Left ventricle myocardium inferior (tissue), 1 donor: ENCODE measurements at regions of chr2 and their contacts with region 1.

Region 1: DNA sequence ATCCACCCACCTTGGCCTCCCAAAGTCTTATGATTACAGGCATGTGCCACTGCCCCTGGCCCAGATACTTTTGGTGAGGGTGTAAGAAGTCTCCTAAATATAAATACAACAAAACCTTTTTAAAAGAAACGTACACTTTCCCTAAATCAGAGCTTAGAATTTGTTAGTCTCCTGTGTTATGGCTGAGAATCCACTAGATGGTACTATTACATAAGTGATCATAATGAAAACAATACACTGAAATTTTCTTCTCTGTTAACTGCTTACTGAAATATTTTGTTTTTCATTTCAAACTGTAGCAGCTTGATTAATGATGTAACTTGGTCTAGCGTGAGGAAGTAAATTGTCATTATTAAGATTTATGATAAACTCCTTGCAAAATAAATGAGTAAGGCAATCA is 74.8 kb upstream of the FAM98A start:
- DNase-seq: no peak
- H3K4me3 ChIP-seq: no peak overlapping the region
- H3K27ac ChIP-seq: no peak overlapping the region
- H3K4me1 ChIP-seq: no peaks in the 10 kb centered on the region
- H3K27me3 ChIP-seq: no peaks in the 10 kb centered on the region
- CTCF ChIP-seq: peak; percentile 70

Region 2: DNA sequence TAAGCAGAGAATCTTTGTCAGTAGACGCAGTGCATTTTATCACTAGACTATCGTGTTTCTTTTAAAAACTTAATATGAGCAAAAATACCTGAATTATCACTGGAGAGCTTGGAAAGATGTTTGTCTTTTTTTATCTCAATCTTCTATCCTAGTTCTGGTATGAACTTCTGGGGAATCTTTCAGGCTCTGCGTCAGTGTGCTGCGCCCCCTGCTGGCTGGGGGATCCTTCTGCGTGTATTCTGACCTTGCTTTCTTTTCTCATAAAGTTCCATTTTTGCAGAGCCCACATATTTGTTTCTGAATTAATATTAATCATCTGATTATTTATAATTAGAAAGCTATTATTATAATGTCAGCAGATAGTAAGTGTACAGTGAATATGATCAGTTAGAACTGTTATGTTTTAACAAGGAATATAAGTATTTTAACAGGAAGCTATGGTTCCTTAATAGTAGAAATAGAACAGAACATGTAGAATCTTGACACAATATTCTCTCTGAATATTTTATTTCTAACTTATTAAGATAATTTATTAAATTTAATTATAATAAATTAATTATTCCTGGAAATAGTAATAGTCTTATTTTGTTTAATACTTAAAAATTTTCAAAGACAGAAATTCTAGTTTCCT is 1736.6 kb after region 1 on chr2:
- intact Hi-C with region 1: loop called (anchors 10 kb)
- DNase-seq: peak; percentile 33
- H3K4me3 ChIP-seq: no peak overlapping the region
- H3K27ac ChIP-seq: no peak overlapping the region
- H3K4me1 ChIP-seq: no peaks in the 10 kb centered on the region
- H3K27me3 ChIP-seq: no peaks in the 10 kb centered on the region
- CTCF ChIP-seq: peak; percentile 93